HepG2 (cell line): ENCODE measurements at regions of chr2 and their contacts with region 1.

Region 1: GRCh38 chr2:108583903-108584520 is 49.7 kb downstream of the LIMS1 start:
- DNase-seq: peak; percentile 82
- ATAC-seq: peak; percentile 96
- H3K4me3 ChIP-seq: no peak overlapping the region
- H3K27ac ChIP-seq: no peak overlapping the region
- H3K4me1 ChIP-seq: peaks cover 18% of the 10 kb centered on the region
- H3K27me3 ChIP-seq: no peaks in the 10 kb centered on the region
- CTCF ChIP-seq: peak; percentile 95
- EP300 ChIP-seq: no peak
- POLR2A ChIP-seq: no peak
- RAD21 ChIP-seq: peak; percentile 94

Region 2: GRCh38 chr2:108288534-108289106 is 295.4 kb before region 1 on chr2 and contains the start of gene SULT1C2:
- CTCF ChIA-PET with region 1: no interaction called
- POLR2A ChIA-PET with region 1: no interaction called
- in situ Hi-C with region 1: no loop called
- intact Hi-C with region 1: loop called (anchors 5 kb)
- DNase-seq: peak; percentile 83
- ATAC-seq: peak; percentile 99
- H3K4me3 ChIP-seq: peak within 1 kb of the TSS; percentile 18 to 60 (median 51)
- H3K27ac ChIP-seq: peak within 1 kb of the TSS; percentile 68
- H3K4me1 ChIP-seq: peaks cover 25% of the 10 kb centered on the region
- H3K27me3 ChIP-seq: no peaks in the 10 kb centered on the region
- CTCF ChIP-seq: peak; percentile 28; the same call in 1 of the 2 replicates
- EP300 ChIP-seq: peak in 1 of 2 experiments; percentile 13; a peak in 1 of 4 replicates
- POLR2A ChIP-seq: peak; percentile 18 to 53; a peak in 1 of 4 replicates
- RAD21 ChIP-seq: no peak
- total RNA-seq, gene SULT1C2: 6.2 and 10.1 TPM in 2 replicates

Region 3: GRCh38 chr2:108396845-108397244 is 187.2 kb before region 1 on chr2:
- CTCF ChIA-PET with region 1: interaction called, 11 read pairs
- POLR2A ChIA-PET with region 1: no interaction called
- in situ Hi-C with region 1: no loop called
- intact Hi-C with region 1: loop called (anchors 1 kb)
- DNase-seq: peak; percentile 57
- ATAC-seq: peak; percentile 59; the same call in 2 of the 3 replicates
- H3K4me3 ChIP-seq: no peak overlapping the region
- H3K27ac ChIP-seq: no peak overlapping the region
- H3K4me1 ChIP-seq: peaks cover 3% of the 10 kb centered on the region
- H3K27me3 ChIP-seq: 0 out of 5 replicates have a peak, but pooled peaks cover 0 to 5% of the 10 kb centered on the region in 2 experiments
- CTCF ChIP-seq: peak; percentile 63
- EP300 ChIP-seq: no peak
- POLR2A ChIP-seq: no peak
- RAD21 ChIP-seq: no peak

Region 4: GRCh38 chr2:108492364-108492763 is 91.6 kb before region 1 on chr2:
- CTCF ChIA-PET with region 1: no interaction called
- POLR2A ChIA-PET with region 1: no interaction called
- in situ Hi-C with region 1: no loop called
- intact Hi-C with region 1: loop called (anchors 2 kb)
- DNase-seq: peak; percentile 42
- ATAC-seq: peak; percentile 71
- H3K4me3 ChIP-seq: no peak overlapping the region
- H3K27ac ChIP-seq: no peak overlapping the region
- H3K4me1 ChIP-seq: peaks cover 27% of the 10 kb centered on the region
- H3K27me3 ChIP-seq: no peaks in the 10 kb centered on the region
- CTCF ChIP-seq: no peak
- EP300 ChIP-seq: 0 out of 4 replicates have a peak, but pooled peaks of 1 of the 2 experiments have one; percentile 7
- POLR2A ChIP-seq: no peak
- RAD21 ChIP-seq: no peak

Region 5: DNA sequence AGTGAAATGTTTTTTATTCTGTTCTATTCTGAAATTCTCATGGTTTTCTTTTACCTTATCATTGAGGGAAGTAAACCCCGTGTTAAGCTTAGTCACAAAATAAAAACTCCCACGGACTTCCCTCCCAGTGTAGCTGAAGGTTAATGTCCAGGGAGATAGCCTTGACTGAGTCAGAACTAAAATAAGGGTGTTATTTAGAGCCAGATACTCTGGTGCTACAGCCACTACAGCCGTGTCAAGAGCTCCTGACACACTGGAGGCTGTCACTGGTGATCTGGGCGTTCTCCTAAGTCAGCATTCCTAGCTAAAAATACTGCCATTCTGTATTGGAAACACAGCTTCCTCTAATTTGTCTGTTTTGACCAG is 53.3 kb after region 1 on chr2:
- CTCF ChIA-PET with region 1: no interaction called
- POLR2A ChIA-PET with region 1: no interaction called
- in situ Hi-C with region 1: no loop called
- intact Hi-C with region 1: loop called (anchors 2 kb)
- DNase-seq: peak; percentile 75
- ATAC-seq: peak; percentile 78
- H3K4me3 ChIP-seq: no peak overlapping the region
- H3K27ac ChIP-seq: peak overlapping the region; percentile 19
- H3K4me1 ChIP-seq: peaks cover 37% of the 10 kb centered on the region
- H3K27me3 ChIP-seq: no peaks in the 10 kb centered on the region
- CTCF ChIP-seq: no peak
- EP300 ChIP-seq: no peak
- POLR2A ChIP-seq: no peak
- RAD21 ChIP-seq: no peak